Activated CD4-positive, alpha-beta memory T cell treated with anti-CD3 and anti-CD28 coated beads for 36 hours (primary cell): ENCODE measurements at regions of chr22 and their contacts with region 1.

Region 1: GRCh38 chr22:31496007-31496734 is at the start of gene SFI1:
- DNase-seq: peak; percentile 96
- H3K4me3 Mint-ChIP-seq: peak within 1 kb of the TSS; percentile 92
- H3K27ac Mint-ChIP-seq: peak within 1 kb of the TSS; percentile 94
- H3K4me1 Mint-ChIP-seq: peaks cover 50% of the 10 kb centered on the region
- H3K27me3 Mint-ChIP-seq: no peaks in the 10 kb centered on the region
- total RNA-seq, gene SFI1: 227 to 240 TPM

Region 2: DNA sequence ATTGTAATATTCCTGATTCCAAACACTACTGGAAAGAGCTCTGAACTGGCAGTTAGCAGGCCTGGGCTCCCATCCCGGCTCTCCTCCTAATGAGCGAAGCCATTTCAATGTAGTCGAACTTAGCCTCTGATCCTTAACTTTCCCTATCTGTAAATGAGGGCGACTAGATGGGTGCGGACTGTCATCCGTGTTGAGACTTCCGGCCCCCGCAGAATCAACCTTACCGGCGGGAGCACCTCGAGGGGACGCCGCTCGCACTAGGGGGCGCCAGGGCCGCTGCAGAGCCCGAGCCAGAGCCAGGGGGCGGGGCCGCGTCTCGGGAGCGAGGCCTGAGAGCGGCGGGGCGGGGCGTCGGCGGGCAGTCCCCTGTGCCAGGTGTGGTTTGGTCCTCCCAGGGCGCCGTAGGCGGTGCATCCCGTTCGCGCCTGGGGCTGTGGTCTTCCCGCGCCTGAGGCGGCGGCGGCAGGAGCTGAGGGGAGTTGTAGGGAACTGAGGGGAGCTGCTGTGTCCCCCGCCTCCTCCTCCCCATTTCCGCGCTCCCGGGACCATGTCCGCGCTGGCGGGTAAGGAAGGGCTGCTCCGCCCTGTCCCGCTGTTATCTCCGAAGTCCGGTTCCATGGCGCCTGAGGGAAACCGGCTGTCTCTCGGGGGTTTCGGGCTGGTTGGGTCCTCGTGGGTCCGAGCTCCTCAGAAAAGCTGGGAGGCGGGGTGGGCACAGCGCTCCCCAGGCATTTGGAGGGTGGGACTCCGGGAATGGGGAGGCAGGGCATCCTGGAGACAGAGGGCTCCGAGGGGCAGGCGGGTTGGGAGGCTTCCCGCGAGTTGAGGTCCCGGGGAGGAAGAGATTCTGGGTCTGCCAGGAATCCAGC is 284.1 kb before region 1 on chr22 and contains the start of gene LIMK2:
- CTCF ChIA-PET with region 1: no interaction called
- POLR2A ChIA-PET with region 1: no interaction called
- intact Hi-C with region 1: no loop called
- DNase-seq: peak; percentile 98
- H3K4me3 Mint-ChIP-seq: peak within 1 kb of the TSS; percentile 83
- H3K27ac Mint-ChIP-seq: peak within 1 kb of the TSS; percentile 87
- H3K4me1 Mint-ChIP-seq: peaks cover 53% of the 10 kb centered on the region
- H3K27me3 Mint-ChIP-seq: no peaks in the 10 kb centered on the region
- total RNA-seq, gene LIMK2: 42.0 to 44.7 TPM

Region 3: DNA sequence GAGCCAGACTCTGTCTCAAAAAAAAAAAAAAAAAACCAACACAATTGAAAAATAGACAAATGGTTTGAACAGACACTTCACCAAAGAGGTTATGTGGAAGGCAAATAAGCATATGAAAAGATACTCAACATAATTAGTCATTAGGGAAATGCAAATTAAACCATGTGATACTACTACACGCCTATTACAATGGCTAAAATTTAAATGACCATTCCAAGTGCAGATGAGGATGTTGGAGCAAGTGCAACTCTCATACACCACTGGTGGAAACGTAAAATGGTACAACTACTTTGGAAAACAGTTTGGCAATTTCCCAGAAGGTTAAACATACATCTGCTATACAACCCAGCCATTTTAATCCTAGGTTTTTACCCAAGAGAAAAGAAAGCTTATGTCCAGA is 30.9 kb before region 1 on chr22:
- CTCF ChIA-PET with region 1: no interaction called
- POLR2A ChIA-PET with region 1: no interaction called
- intact Hi-C with region 1: no loop called
- DNase-seq: no peak
- H3K4me3 Mint-ChIP-seq: no peak overlapping the region
- H3K27ac Mint-ChIP-seq: no peak overlapping the region
- H3K4me1 Mint-ChIP-seq: no peaks in the 10 kb centered on the region
- H3K27me3 Mint-ChIP-seq: no peaks in the 10 kb centered on the region

Region 4: GRCh38 chr22:31520051-31520450 is 23.9 kb after region 1 on chr22:
- CTCF ChIA-PET with region 1: interaction called, 3 read pairs
- POLR2A ChIA-PET with region 1: no interaction called
- intact Hi-C with region 1: loop called (anchors 1 kb)
- DNase-seq: no peak
- H3K4me3 Mint-ChIP-seq: no peak overlapping the region
- H3K27ac Mint-ChIP-seq: peak overlapping the region; percentile 34
- H3K4me1 Mint-ChIP-seq: peaks cover 60% of the 10 kb centered on the region
- H3K27me3 Mint-ChIP-seq: no peaks in the 10 kb centered on the region

Region 5: GRCh38 chr22:31526270-31526669 is 30.1 kb after region 1 on chr22:
- CTCF ChIA-PET with region 1: no interaction called
- POLR2A ChIA-PET with region 1: interaction called, 4 read pairs
- intact Hi-C with region 1: loop called (anchors 1 kb)
- DNase-seq: peak; percentile 76
- H3K4me3 Mint-ChIP-seq: peak overlapping the region; percentile 45
- H3K27ac Mint-ChIP-seq: peak overlapping the region; percentile 96
- H3K4me1 Mint-ChIP-seq: peaks cover 64% of the 10 kb centered on the region
- H3K27me3 Mint-ChIP-seq: no peaks in the 10 kb centered on the region

Region 6: GRCh38 chr22:31585161-31585859 is 89.1 kb after region 1 on chr22:
- CTCF ChIA-PET with region 1: no interaction called
- POLR2A ChIA-PET with region 1: no interaction called
- intact Hi-C with region 1: loop called (anchors 2 kb)
- DNase-seq: peak; percentile 49
- H3K4me3 Mint-ChIP-seq: no peak overlapping the region
- H3K27ac Mint-ChIP-seq: peak overlapping the region; percentile 6
- H3K4me1 Mint-ChIP-seq: peaks cover 55% of the 10 kb centered on the region
- H3K27me3 Mint-ChIP-seq: no peaks in the 10 kb centered on the region